Common myeloid progenitor, CD34-positive (primary cell): ENCODE measurements at regions of chr7 and their contacts with region 1.

Region 1: DNA sequence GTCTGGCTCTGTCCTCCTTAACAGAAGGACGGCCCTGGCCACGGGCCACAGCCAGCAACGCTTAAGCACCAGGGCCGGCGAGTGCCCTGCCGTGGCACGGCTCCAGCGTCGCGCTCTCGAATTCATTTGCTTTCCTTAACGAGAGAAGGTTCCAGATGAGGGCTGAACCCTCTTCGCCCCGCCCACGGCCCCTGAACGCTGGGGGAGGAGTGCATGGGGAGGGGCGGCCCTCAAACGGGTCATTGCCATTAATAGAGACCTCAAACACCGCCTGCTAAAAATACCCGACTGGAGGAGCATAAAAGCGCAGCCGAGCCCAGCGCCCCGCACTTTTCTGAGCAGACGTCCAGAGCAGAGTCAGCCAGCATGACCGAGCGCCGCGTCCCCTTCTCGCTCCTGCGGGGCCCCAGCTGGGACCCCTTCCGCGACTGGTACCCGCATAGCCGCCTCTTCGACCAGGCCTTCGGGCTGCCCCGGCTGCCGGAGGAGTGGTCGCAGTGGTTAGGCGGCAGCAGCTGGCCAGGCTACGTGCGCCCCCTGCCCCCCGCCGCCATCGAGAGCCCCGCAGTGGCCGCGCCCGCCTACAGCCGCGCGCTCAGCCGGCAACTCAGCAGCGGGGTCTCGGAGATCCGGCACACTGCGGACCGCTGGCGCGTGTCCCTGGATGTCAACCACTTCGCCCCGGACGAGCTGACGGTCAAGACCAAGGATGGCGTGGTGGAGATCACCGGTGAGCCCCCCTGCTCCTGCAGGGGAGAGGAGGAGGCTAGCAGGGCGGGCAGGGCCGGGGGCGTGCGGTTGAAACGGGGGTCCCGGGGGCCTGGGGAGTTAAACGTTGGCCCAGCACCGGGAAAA is at the start of gene HSPB1:
- DNase-seq: peak; percentile 84 to 92 (median 90)
- H3K4me3 ChIP-seq: peak within 1 kb of the TSS; percentile 69 to 91 (median 74)
- H3K27ac ChIP-seq: peak within 1 kb of the TSS in 1 of 2 experiments; percentile 79
- H3K4me1 ChIP-seq: peaks cover 0 to 27% (median 20%) of the 10 kb centered on the region in 4 experiments
- H3K27me3 ChIP-seq: no peaks in the 10 kb centered on the region

Region 2: GRCh38 chr7:76291343-76292212 is 11.0 kb before region 1 on chr7:
- CTCF ChIA-PET with region 1: interaction called, 303 read pairs
- POLR2A ChIA-PET with region 1: interaction called, 15 read pairs
- DNase-seq: peak; percentile 92 to 97 (median 96)
- H3K4me3 ChIP-seq: peak overlapping the region in 6 of 7 experiments; percentile 13 to 63 (median 50)
- H3K27ac ChIP-seq: peak overlapping the region; percentile 40 to 72
- H3K4me1 ChIP-seq: peaks cover 3 to 52% (median 41%) of the 10 kb centered on the region in 4 experiments
- H3K27me3 ChIP-seq: no peaks in the 10 kb centered on the region